Activated CD4-positive, alpha-beta memory T cell treated with anti-CD3 and anti-CD28 coated beads for 36 hours (primary cell): ENCODE measurements at regions of chr15 and their contacts with region 1.

Region 1: DNA sequence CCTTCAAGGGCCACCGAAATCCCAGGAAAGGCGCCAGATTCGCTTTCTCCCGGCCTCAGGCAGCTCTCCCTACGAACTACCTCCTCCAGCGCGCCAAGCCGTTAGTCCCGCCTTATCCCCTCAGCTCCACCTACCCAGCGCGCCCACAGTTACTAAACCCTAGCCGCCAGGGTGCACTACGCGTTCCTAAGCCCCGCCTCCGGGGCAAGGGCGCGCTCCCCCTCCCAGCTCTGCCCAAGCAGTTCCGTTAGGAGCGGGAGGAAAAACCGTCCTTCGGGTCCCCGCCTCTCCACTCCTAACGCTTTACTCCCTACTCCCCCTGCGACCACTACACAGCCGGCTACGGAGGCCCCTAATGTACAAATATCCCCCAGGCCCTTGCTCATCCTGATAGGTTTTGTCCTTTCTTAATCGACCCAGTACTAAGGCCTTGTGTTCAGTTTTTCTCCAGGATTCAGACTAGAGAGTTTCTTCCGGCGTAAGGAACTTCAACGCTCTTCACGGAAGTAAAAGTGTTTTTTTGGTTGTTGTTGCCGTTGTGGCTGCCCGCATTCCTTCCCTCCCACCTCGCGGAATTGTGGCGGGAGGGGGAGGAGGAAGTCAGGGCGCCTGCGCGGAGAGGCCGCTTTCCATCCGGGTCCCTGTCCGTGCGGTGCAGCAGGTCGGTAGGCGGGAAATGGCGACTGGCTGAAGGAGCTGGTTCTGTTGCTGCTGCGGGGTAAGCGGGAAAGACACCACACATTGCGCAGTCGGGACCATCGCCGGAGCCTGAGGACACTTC is at the start of gene CTDSPL2:
- DNase-seq: peak; percentile 97
- H3K4me3 Mint-ChIP-seq: peak within 1 kb of the TSS; percentile 95
- H3K27ac Mint-ChIP-seq: peak within 1 kb of the TSS; percentile 100
- H3K4me1 Mint-ChIP-seq: peaks cover 36% of the 10 kb centered on the region
- H3K27me3 Mint-ChIP-seq: no peaks in the 10 kb centered on the region
- total RNA-seq, gene CTDSPL2: 53.1 to 55.9 TPM

Region 2: DNA sequence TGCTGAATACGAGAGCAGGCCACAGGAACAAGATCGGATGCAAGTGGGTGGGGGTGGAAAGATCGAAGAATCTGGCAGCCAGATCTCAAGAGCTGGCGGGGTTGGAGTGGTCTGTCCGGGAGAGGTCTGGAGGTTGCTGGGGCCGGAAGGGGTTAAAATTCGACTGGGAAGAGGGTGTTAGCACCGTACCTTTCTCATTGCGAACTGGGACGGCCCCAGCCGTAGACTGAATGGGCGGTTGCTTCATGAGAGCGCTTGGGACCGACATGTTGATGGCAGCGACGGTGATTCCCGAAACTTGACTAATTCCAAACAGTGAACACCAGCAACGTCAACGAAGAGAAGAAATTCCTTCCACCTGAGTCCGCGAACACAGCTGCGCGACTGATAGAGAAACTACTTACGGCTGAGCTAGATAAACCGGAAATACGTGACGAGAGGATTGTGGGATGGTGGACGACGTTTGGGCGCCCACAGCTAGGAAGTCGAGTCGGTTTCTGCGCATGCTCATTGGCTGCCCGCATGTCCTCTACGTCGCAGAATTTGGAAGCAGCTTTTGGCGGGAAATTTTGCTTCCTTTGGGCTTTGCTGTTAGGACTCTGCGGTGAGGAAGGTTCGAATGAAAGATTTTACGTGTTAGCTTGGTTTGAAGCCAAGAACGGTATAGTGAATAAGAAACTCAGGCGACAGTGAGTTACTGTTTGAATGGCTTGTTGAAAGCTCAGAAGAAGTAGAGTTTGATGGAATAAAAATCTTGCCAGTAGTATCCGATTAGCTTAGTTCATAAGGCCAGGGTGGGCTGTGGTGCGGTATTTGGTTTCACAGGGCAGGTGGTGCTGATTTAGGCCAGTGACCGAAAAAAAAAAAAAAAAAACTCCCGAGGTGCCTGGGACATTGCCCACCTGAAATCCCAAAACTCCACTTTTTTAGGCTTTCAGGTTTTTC is 602.6 kb before region 1 on chr15 and contains the start of gene MFAP1:
- CTCF ChIA-PET with region 1: no interaction called
- POLR2A ChIA-PET with region 1: no interaction called
- intact Hi-C with region 1: loop called (anchors 5 kb)
- DNase-seq: peak; percentile 96
- H3K4me3 Mint-ChIP-seq: peak within 1 kb of the TSS; percentile 99
- H3K27ac Mint-ChIP-seq: peak within 1 kb of the TSS; percentile 97
- H3K4me1 Mint-ChIP-seq: peaks cover 56% of the 10 kb centered on the region
- H3K27me3 Mint-ChIP-seq: no peaks in the 10 kb centered on the region
- total RNA-seq, gene MFAP1: 37.2 to 38.0 TPM

Region 3: DNA sequence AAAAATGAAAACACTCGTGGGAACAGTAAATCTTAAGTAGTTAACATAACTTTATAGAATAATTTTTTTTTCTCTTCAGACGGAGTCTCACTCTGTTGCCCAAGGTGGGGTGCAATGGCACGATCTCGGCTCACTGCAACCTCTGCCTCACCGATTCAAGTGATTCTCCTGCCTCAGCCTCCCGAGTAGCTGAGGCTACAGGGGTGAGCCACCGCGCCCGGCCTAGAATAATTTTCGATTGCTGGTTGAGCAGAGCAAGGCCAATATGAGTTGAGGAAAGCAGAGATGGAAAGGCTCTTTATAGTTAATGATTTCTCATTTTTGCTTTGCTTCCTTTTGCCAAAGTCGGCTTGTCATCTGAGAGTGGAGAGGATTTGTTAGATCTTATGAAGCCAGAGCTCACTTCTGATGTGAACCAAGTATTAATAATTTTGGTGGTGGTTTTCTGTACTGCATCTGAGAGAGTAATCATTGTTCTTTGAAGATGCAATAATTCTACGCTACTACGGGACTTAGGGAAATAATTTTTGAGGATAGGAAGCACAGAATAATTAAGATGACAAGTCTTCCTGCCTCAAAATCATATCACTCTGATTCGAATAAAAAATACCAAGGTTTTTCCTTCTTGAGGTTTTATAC is 140.2 kb before region 1 on chr15:
- CTCF ChIA-PET with region 1: interaction called, 6 read pairs
- POLR2A ChIA-PET with region 1: interaction called, 17 read pairs
- intact Hi-C with region 1: loop called (anchors 1 kb)
- DNase-seq: no peak
- H3K4me3 Mint-ChIP-seq: peak overlapping the region; percentile 86
- H3K27ac Mint-ChIP-seq: peak overlapping the region; percentile 50
- H3K4me1 Mint-ChIP-seq: peaks cover 36% of the 10 kb centered on the region
- H3K27me3 Mint-ChIP-seq: peaks cover 3% of the 10 kb centered on the region

Region 4: GRCh38 chr15:44468713-44469385 is 41.7 kb after region 1 on chr15:
- CTCF ChIA-PET with region 1: interaction called, 3 read pairs
- POLR2A ChIA-PET with region 1: interaction called, 5 read pairs
- intact Hi-C with region 1: loop called (anchors 5 kb)
- DNase-seq: no peak
- H3K4me3 Mint-ChIP-seq: no peak overlapping the region
- H3K27ac Mint-ChIP-seq: peak overlapping the region; percentile 7
- H3K4me1 Mint-ChIP-seq: peaks cover 17% of the 10 kb centered on the region
- H3K27me3 Mint-ChIP-seq: no peaks in the 10 kb centered on the region

Region 5: GRCh38 chr15:44536962-44537734 is 110.0 kb after region 1 on chr15 and contains the start of gene EIF3J:
- CTCF ChIA-PET with region 1: no interaction called
- POLR2A ChIA-PET with region 1: interaction called, 11 read pairs
- intact Hi-C with region 1: loop called (anchors 1 kb)
- DNase-seq: peak; percentile 96
- H3K4me3 Mint-ChIP-seq: peak within 1 kb of the TSS; percentile 84
- H3K27ac Mint-ChIP-seq: peak within 1 kb of the TSS; percentile 94
- H3K4me1 Mint-ChIP-seq: peaks cover 43% of the 10 kb centered on the region
- H3K27me3 Mint-ChIP-seq: no peaks in the 10 kb centered on the region
- total RNA-seq, gene EIF3J: 92.6 to 95.2 TPM

Region 6: GRCh38 chr15:44682211-44682610 is 255.0 kb after region 1 on chr15:
- CTCF ChIA-PET with region 1: no interaction called
- POLR2A ChIA-PET with region 1: no interaction called
- intact Hi-C with region 1: loop called (anchors 5 kb)
- DNase-seq: peak; percentile 32
- H3K4me3 Mint-ChIP-seq: peak overlapping the region; percentile 68
- H3K27ac Mint-ChIP-seq: peak overlapping the region; percentile 94
- H3K4me1 Mint-ChIP-seq: peaks cover 73% of the 10 kb centered on the region
- H3K27me3 Mint-ChIP-seq: no peaks in the 10 kb centered on the region

Region 7: DNA sequence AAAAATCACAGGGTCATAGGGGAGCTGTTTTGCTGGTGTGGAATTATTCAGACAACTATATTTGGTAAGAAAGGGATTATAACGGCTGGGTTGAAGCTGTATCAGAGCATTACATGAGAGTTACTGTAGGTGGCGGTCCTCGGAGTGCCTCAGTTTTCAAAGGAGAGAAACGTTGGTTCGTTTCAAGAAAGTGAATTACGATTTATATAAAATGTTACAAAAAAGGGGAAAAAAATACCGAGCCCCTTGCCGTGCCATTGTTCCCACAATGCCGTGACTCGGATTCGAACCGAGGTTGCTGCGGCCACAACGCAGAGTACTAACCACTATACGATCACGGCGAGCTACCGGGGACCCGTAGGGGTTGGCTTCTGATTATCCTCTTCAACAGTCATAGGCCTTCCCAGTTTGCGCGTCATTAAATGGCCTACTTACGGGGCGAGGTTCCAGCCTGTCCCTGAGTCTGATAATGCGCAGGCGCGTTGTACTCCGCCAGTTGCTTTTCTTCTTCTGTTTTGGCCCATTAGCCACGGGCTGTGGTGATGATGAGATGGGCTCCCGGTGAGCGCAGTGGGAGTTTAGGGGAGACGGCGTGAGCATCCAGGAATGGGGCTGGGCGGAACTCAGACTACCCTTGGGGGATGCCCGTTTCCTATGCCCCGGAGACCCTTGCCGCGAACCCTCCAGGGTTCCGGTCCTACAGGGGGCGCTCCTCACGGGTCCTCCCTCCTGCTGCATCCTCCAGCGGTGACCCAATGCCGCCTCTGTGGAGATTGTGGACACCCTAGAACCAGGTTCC is 771.4 kb after region 1 on chr15:
- CTCF ChIA-PET with region 1: no interaction called
- POLR2A ChIA-PET with region 1: no interaction called
- intact Hi-C with region 1: loop called (anchors 2 kb)
- DNase-seq: peak; percentile 98
- H3K4me3 Mint-ChIP-seq: no peak overlapping the region
- H3K27ac Mint-ChIP-seq: no peak overlapping the region
- H3K4me1 Mint-ChIP-seq: peaks cover 13% of the 10 kb centered on the region
- H3K27me3 Mint-ChIP-seq: peaks cover 3% of the 10 kb centered on the region